ENCODE measurements at regions of chr4 and their contacts with region 1.

Region 1: DNA sequence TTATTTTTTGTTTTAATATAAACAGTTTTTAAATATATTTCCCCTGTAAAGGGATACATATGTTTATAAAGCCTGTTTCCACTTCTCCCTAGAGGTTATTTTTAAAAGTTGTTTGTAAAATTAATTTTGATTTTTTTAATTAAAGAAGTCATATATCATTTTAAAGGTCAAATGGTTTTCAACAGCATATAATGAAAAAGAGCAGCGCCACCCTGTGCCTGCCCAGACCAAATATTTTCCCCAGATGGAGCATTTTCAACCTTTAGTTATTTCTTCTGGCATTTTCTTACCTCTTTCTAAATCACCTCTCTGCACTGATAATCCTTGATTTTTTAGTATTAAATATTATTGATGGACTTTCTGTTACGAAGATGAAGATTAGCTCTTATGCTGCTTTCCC is 21.0 kb downstream of the MSX1 start:
- DNase-seq: no peak
- ATAC-seq: no peak
- H3K4me3 ChIP-seq: no peak overlapping the region
- H3K27ac ChIP-seq: no peak overlapping the region
- H3K4me1 ChIP-seq: no peaks in the 10 kb centered on the region
- H3K27me3 ChIP-seq: peaks cover 0 to 86% (median 72%) of the 10 kb centered on the region in 7 donors
- CTCF ChIP-seq: peak in 6 of 9 donors; percentile 21 to 51 (median 37)

Region 2: GRCh38 chr4:4677556-4678522 is 202.7 kb before region 1 on chr4:
- intact Hi-C with region 1: loop called in 2 of 10 experiments (anchors 10 kb)
- DNase-seq: peak in 1 of 2 donors; percentile 5
- ATAC-seq: peak in 1 of 8 donors; percentile 61
- H3K4me3 ChIP-seq: peak overlapping the region in 2 of 10 donors; percentile 1 to 10
- H3K27ac ChIP-seq: no peak overlapping the region
- H3K4me1 ChIP-seq: no peaks in the 10 kb centered on the region
- H3K27me3 ChIP-seq: no peaks in the 10 kb centered on the region
- CTCF ChIP-seq: peak; percentile 5 to 63 (median 57)

Measured in heart right ventricle (tissue), 16 donors.